MCF 10A (cell line): ENCODE measurements at regions of chr5 and their contacts with region 1.

Region 1: GRCh38 chr5:52799983-52800393 is 12.3 kb downstream of the ITGA1 start:
- DNase-seq: peak; percentile 94
- H3K4me3 Mint-ChIP-seq: peak overlapping the region; percentile 92
- H3K27ac Mint-ChIP-seq: peak overlapping the region; percentile 90
- H3K4me1 Mint-ChIP-seq: peaks cover 38% of the 10 kb centered on the region
- H3K27me3 Mint-ChIP-seq: no peaks in the 10 kb centered on the region
- CTCF ChIP-seq: no peak

Region 2: DNA sequence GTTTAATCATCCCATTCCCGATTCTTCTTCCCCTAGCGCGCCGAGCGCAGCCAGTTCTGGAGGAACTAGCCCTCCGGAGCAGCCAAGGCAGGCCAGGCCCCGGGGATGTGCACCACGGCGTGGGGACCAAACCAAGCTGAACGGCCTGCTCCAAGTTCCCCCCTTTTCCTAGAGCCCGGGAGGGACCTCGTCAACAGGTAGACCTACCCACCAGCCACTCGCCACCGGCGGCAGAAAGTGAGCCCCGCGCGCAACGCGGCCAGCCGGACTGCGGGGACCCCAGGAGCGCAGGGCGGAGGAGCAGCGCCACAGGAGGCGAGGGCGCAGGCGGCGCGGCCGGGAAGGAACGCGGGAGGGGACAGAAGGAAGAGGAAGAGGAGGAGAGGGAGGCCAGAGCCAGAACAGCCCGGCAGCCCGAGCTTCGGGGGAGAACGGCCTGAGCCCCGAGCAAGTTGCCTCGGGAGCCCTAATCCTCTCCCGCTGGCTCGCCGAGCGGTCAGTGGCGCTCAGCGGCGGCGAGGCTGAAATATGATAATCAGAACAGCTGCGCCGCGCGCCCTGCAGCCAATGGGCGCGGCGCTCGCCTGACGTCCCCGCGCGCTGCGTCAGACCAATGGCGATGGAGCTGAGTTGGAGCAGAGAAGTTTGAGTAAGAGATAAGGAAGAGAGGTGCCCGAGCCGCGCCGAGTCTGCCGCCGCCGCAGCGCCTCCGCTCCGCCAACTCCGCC is 1417.1 kb before region 1 on chr5 and contains the start of gene ISL1:
- CTCF ChIA-PET with region 1: no interaction called
- POLR2A ChIA-PET with region 1: no interaction called
- intact Hi-C with region 1: loop called (anchors 5 kb)
- DNase-seq: peak; percentile 79
- H3K4me3 Mint-ChIP-seq: peak within 1 kb of the TSS; percentile 98
- H3K27ac Mint-ChIP-seq: peak within 1 kb of the TSS; percentile 83
- H3K4me1 Mint-ChIP-seq: peaks cover 46% of the 10 kb centered on the region
- H3K27me3 Mint-ChIP-seq: no peaks in the 10 kb centered on the region
- CTCF ChIP-seq: no peak
- total RNA-seq, gene ISL1: 1.2 TPM in 2 replicates

Region 3: DNA sequence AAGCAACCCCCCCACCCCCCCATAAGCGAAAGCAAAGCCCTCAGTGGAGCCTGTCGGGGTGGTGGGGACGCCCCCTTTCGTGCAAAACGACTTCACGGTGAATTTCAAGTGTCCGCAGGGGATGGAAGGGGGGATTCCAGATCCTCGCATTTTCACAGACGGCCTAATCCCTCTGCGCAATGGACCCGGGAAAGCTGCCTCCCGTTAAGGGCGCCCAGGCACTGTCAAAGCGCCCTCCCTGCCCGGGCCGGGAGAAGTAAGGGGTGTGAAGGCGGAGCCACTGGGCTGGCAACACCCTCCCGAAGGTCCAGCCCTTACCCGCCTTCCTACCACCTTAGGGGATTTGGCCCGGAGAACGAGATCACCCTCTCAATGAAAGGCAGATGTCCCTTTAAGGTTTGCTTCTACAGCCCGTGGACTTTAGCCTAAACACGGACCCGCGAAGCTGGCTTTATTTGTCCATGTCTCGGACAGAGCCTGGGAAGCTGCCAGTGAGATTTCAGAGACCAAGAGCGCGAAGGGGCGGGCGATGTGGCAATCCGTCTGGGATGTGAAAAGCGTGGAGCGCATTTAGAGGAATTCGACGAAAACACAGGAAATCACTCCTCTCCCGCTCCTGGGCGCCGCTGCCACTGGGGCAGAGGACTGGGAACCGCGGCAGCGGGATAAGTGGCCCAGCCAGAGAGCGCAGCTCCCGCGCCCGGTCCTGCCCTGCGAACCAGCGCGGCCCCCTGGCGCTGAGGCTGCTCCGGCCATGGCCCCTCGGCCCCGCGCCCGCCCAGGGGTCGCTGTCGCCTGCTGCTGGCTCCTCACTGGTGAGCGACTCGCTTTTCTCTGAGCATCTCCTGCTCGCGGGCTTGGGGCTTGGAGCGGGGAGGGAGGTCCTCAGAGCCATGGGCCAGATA is 12.1 kb before region 1 on chr5 and contains the starts of genes ITGA1 and PELO:
- CTCF ChIA-PET with region 1: interaction called, 16 read pairs
- POLR2A ChIA-PET with region 1: interaction called, 34 read pairs
- intact Hi-C with region 1: loop called (anchors 1 kb)
- DNase-seq: peak; percentile 83
- H3K4me3 Mint-ChIP-seq: peak within 1 kb of the TSS; percentile 94
- H3K27ac Mint-ChIP-seq: peak within 1 kb of the TSS; percentile 72
- H3K4me1 Mint-ChIP-seq: peaks cover 28% of the 10 kb centered on the region
- H3K27me3 Mint-ChIP-seq: no peaks in the 10 kb centered on the region
- CTCF ChIP-seq: no peak
- total RNA-seq, gene ITGA1: 5.3 and 7.7 TPM in 2 replicates
- total RNA-seq, gene PELO: 22.5 and 23.1 TPM in 2 replicates

Region 4: GRCh38 chr5:52864371-52864770 is 64.4 kb after region 1 on chr5:
- CTCF ChIA-PET with region 1: interaction called, 4 read pairs
- POLR2A ChIA-PET with region 1: interaction called, 33 read pairs
- intact Hi-C with region 1: no loop called
- DNase-seq: peak; percentile 53
- H3K4me3 Mint-ChIP-seq: no peak overlapping the region
- H3K27ac Mint-ChIP-seq: peak overlapping the region; percentile 27
- H3K4me1 Mint-ChIP-seq: peaks cover 28% of the 10 kb centered on the region
- H3K27me3 Mint-ChIP-seq: no peaks in the 10 kb centered on the region
- CTCF ChIP-seq: no peak

Region 5: GRCh38 chr5:52884453-52884852 is 84.5 kb after region 1 on chr5:
- CTCF ChIA-PET with region 1: no interaction called
- POLR2A ChIA-PET with region 1: no interaction called
- intact Hi-C with region 1: no loop called
- DNase-seq: no peak
- H3K4me3 Mint-ChIP-seq: no peak overlapping the region
- H3K27ac Mint-ChIP-seq: no peak overlapping the region
- H3K4me1 Mint-ChIP-seq: no peaks in the 10 kb centered on the region
- H3K27me3 Mint-ChIP-seq: no peaks in the 10 kb centered on the region
- CTCF ChIP-seq: no peak

Region 6: GRCh38 chr5:52922386-52922785 is 122.4 kb after region 1 on chr5:
- CTCF ChIA-PET with region 1: interaction called, 4 read pairs
- POLR2A ChIA-PET with region 1: interaction called, 17 read pairs
- intact Hi-C with region 1: no loop called
- DNase-seq: peak; percentile 100
- H3K4me3 Mint-ChIP-seq: no peak overlapping the region
- H3K27ac Mint-ChIP-seq: peak overlapping the region; percentile 25
- H3K4me1 Mint-ChIP-seq: peaks cover 10% of the 10 kb centered on the region
- H3K27me3 Mint-ChIP-seq: no peaks in the 10 kb centered on the region
- CTCF ChIP-seq: no peak